ENCODE measurements at regions of chr5 and their contacts with region 1.

Region 1: GRCh38 chr5:67209142-67209771 is 12.7 kb upstream of the CD180 start:
- DNase-seq: peak; percentile 33 to 77 (median 69)
- ATAC-seq: peak; percentile 74
- H3K4me3 ChIP-seq: peak overlapping the region; percentile 14
- H3K4me3 Mint-ChIP-seq: peak overlapping the region in 5 of 10 donors; percentile 47 to 55 (median 50)
- H3K27ac ChIP-seq: peak overlapping the region; percentile 0
- H3K27ac Mint-ChIP-seq: peak overlapping the region; percentile 78 to 98 (median 85)
- H3K4me1 ChIP-seq: peaks cover 50 to 54% of the 10 kb centered on the region in 2 donors
- H3K4me1 Mint-ChIP-seq: peaks cover 39 to 71% (median 66%) of the 10 kb centered on the region in 7 donors
- H3K27me3 ChIP-seq: no peaks in the 10 kb centered on the region
- H3K27me3 Mint-ChIP-seq: peaks cover 0 to 2% (median 0%) of the 10 kb centered on the region in 5 donors

Region 2: DNA sequence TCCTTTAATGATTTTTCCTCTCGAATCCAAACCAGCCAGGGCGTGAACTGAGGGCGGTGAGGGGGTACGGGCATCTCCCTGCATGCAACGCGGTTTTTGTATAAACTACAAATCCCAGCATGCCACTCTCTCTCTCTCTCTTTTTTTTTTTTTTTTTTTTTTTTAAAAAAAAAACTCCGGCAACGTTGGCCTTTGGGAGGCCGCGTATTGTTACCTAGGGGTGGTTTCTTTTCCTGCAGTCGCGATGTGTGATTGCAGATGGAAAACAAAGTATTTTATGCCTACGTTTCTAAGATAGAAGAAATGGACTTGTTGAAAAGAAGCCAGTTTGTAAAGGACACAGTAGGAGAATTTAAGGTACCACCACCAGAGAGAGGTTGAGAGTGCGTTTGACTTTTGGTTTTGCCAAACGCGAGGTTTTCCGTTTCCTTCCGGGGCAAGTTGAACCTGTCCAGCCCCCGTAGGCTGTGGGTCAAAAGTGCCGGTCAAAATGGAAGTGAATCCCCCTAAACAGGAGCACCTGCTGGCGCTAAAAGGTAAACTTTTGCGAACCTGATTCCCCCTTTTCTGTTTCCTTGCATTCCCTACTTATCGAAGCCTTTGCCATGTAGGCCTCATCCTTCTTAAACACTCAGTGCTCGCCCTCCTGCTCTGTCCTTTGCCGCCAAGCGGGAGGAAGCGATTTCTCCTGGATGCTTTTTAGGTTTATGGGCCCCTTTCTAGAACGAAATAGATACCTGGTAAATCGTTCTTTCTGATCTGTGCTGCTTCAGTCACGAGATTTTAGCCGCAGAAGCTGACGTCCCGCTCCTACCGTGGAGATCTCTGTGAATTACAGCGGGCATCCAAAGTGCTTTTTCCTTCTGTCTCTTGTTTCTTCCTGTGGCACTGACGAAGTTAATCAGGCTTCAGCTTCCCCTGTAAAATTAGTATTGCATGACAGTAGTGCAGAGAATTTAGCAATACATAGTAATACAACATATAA is 1584.4 kb before region 1 on chr5 and contains the starts of genes SHLD3 and TRAPPC13:
- CTCF ChIA-PET with region 1: no interaction called
- POLR2A ChIA-PET with region 1: no interaction called
- intact Hi-C with region 1: loop called in 1 of 2 experiments (anchors 10 kb)
- DNase-seq: peak; percentile 57 to 92 (median 91)
- ATAC-seq: peak; percentile 86
- H3K4me3 ChIP-seq: peak within 1 kb of the TSS; percentile 75
- H3K4me3 Mint-ChIP-seq: peak within 1 kb of the TSS; percentile 93 to 100 (median 98)
- H3K27ac ChIP-seq: peak within 1 kb of the TSS; percentile 92
- H3K27ac Mint-ChIP-seq: peak within 1 kb of the TSS; percentile 97 to 100 (median 98)
- H3K4me1 ChIP-seq: peaks cover 20% of the 10 kb centered on the region in 2 donors
- H3K4me1 Mint-ChIP-seq: peaks cover 14 to 73% (median 51%) of the 10 kb centered on the region in 7 donors
- H3K27me3 ChIP-seq: no peaks in the 10 kb centered on the region
- H3K27me3 Mint-ChIP-seq: peaks cover 0 to 3% (median 0%) of the 10 kb centered on the region in 5 donors
- total RNA-seq, gene SHLD3: 4.8 to 11.3 (median 5.8) TPM
- total RNA-seq, gene TRAPPC13: 18.2 to 23.1 (median 20.8) TPM

Region 3: DNA sequence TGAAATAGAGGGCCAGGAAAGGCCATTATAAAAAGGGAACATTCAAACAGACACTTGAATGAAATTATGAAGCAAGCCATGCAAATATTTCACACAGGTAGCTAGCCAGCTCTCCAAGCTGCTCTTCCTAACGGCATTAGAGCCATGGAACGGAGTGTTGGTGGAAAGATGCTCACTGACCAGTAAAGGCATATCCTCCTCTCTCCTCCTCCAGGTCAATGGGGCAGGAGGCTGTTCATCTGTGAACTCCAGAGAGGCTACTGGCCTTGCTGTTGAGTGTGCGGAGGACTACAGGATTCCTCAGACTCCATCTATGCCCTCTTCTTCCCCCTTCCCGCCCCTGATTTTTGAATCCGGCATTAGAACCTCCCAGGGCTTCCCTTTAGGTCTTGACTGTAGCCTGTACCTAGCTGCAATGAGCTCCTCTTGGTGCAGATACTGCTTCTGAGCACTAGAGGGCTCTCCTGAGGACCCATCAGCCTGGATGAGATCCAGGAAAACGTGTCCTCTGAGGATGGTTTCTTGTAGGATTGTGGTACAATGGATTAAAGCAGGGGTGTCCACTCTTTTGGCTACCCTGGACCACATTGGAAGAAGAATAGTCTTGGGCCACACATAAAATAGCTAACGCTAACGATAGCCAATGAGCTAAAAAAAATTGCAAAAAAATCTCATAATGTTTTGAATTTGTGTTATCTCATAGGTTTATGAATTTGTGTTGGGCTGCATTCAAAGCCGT is 903.0 kb before region 1 on chr5:
- CTCF ChIA-PET with region 1: interaction called, 3 read pairs
- POLR2A ChIA-PET with region 1: no interaction called
- intact Hi-C with region 1: loop called in 1 of 2 experiments (anchors 5 kb)
- DNase-seq: peak in 6 of 9 donors; percentile 10 to 31 (median 21)
- ATAC-seq: peak; percentile 75
- H3K4me3 ChIP-seq: no peak overlapping the region
- H3K4me3 Mint-ChIP-seq: no peak overlapping the region
- H3K27ac ChIP-seq: no peak overlapping the region
- H3K27ac Mint-ChIP-seq: peak overlapping the region in 1 of 9 donors; percentile 36
- H3K4me1 ChIP-seq: no peaks in the 10 kb centered on the region
- H3K4me1 Mint-ChIP-seq: peaks cover 0 to 6% (median 3%) of the 10 kb centered on the region in 7 donors
- H3K27me3 ChIP-seq: no peaks in the 10 kb centered on the region
- H3K27me3 Mint-ChIP-seq: peaks cover 0 to 22% (median 13%) of the 10 kb centered on the region in 5 donors

Region 4: GRCh38 chr5:66987949-66988838 is 221.1 kb before region 1 on chr5:
- CTCF ChIA-PET with region 1: interaction called, 5 read pairs
- POLR2A ChIA-PET with region 1: interaction called, 3 read pairs
- intact Hi-C with region 1: loop called (anchors 1 kb)
- DNase-seq: peak in 6 of 9 donors; percentile 15 to 52 (median 40)
- ATAC-seq: peak; percentile 80
- H3K4me3 ChIP-seq: no peak overlapping the region
- H3K4me3 Mint-ChIP-seq: no peak overlapping the region
- H3K27ac ChIP-seq: no peak overlapping the region
- H3K27ac Mint-ChIP-seq: no peak overlapping the region
- H3K4me1 ChIP-seq: no peaks in the 10 kb centered on the region
- H3K4me1 Mint-ChIP-seq: peaks cover 0 to 17% (median 5%) of the 10 kb centered on the region in 7 donors
- H3K27me3 ChIP-seq: no peaks in the 10 kb centered on the region
- H3K27me3 Mint-ChIP-seq: peaks cover 0 to 11% (median 0%) of the 10 kb centered on the region in 5 donors

Region 5: GRCh38 chr5:67182301-67182790 is 26.9 kb before region 1 on chr5:
- CTCF ChIA-PET with region 1: no interaction called
- POLR2A ChIA-PET with region 1: interaction called, 15 read pairs
- intact Hi-C with region 1: loop called in 1 of 2 experiments (anchors 2 kb)
- DNase-seq: peak in 1 of 9 donors; percentile 35
- ATAC-seq: peak; percentile 31
- H3K4me3 ChIP-seq: no peak overlapping the region
- H3K4me3 Mint-ChIP-seq: peak overlapping the region in 6 of 10 donors; percentile 29 to 71 (median 66)
- H3K27ac ChIP-seq: peak overlapping the region; percentile 58
- H3K27ac Mint-ChIP-seq: peak overlapping the region; percentile 31 to 93 (median 88)
- H3K4me1 ChIP-seq: peaks cover 5 to 34% of the 10 kb centered on the region in 2 donors
- H3K4me1 Mint-ChIP-seq: peaks cover 29 to 74% (median 62%) of the 10 kb centered on the region in 7 donors
- H3K27me3 ChIP-seq: no peaks in the 10 kb centered on the region
- H3K27me3 Mint-ChIP-seq: no peaks in the 10 kb centered on the region

Region 6: DNA sequence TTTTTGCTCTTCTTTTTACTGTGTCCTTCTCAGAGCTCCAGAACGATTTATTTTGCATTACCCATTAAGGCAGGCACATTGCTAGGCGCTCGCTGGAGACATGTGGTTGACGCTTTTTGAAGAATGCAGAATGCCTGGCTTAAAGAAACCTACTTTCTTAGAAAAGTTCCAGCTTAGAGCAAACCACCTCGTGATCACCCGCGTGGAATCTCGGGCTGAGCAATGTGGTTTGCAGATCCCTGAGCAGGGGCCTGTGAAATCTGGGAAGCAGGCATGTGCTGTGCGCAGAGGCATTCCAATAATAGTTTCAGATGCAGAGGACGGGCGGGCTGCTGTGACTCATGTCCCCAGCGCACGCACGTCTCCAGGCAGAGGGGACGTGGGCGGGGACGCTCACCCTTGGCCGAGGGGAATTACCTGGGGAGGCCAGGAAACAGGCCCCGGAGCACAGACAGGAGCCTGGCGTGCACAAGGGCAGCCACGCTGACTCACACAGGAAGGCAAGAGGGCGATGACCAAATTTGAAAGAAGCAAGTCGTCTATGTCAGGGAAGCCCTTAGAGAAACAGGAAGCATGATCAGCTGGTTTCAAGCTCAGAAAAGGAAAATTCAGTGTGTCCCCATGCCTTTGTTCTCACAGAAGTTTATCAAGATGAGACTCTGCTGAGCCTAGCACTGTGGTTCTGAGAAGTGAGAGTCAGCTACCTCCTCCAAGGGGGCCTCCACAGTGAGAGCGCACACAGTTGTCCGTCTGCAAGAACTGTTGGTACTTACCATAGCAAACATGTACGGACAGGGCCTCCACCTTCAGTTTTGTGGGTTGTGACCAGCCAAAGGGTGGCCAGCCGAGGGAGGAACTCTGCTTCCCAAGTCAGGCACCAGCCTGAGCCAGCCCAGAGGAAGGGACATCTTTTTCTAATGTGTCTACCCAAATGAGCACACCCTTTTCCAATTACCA is 1224.9 kb after region 1 on chr5:
- CTCF ChIA-PET with region 1: no interaction called
- POLR2A ChIA-PET with region 1: no interaction called
- intact Hi-C with region 1: loop called in 1 of 2 experiments (anchors 10 kb)
- DNase-seq: peak; percentile 45 to 91 (median 68)
- ATAC-seq: peak; percentile 94
- H3K4me3 ChIP-seq: peak overlapping the region; percentile 36
- H3K4me3 Mint-ChIP-seq: peak overlapping the region; percentile 37 to 81 (median 76)
- H3K27ac ChIP-seq: no peak overlapping the region
- H3K27ac Mint-ChIP-seq: peak overlapping the region; percentile 52 to 92 (median 76)
- H3K4me1 ChIP-seq: peaks cover 17 to 23% of the 10 kb centered on the region in 2 donors
- H3K4me1 Mint-ChIP-seq: peaks cover 23 to 45% (median 34%) of the 10 kb centered on the region in 7 donors
- H3K27me3 ChIP-seq: no peaks in the 10 kb centered on the region
- H3K27me3 Mint-ChIP-seq: peaks cover 0 to 63% (median 0%) of the 10 kb centered on the region in 5 donors

Measured in naive thymus-derived CD4-positive, alpha-beta T cell (primary cell).